SK-N-SH (cell line): ENCODE measurements at regions of chr7 and their contacts with region 1.

Region 1: DNA sequence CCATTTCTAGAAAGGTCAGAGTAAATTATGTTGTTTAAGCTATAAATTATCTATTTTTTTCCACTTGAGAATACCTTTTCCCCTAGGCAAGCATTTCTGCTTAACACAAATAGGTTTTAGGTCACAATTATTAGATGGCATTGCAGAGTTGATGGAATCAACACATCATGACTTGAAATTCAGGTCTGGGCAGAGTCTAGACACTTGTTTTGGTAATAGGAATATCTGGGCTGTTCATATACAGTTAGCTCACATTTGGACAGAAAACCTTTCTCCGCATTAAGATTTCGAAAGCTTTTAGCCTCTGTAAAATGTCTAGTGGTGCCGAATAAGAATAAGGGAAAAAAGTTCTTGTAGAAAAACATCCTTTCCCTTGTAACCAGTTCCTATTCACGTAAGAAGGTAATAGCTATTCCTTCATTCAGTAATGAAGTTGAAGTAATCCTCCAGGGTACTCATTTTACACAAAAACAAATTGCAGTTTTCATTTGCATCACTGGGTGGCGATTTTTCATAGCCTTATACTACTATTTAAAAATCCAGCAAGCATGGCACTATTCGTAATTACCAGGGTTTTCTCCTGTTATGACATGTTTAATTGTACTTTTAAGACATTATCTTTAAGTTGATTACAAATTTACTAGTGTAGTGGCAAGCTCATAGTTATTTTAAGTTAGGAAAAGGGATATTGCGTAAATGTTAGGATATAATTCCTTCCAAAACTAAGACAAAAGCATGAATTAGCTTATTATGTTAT is 37.0 kb downstream of the RPA3 start:
- DNase-seq: peak; percentile 48
- H3K4me3 ChIP-seq: no peak overlapping the region
- H3K27ac ChIP-seq: peak overlapping the region in 1 of 2 experiments; percentile 90; a peak in 2 of 4 replicates
- H3K4me1 ChIP-seq: peaks cover 0 to 12% of the 10 kb centered on the region in 2 experiments; a peak in 2 of 4 replicates
- H3K27me3 ChIP-seq: no peaks in the 10 kb centered on the region
- CTCF ChIP-seq: peak; percentile 93
- EP300 ChIP-seq: no peak
- RAD21 ChIP-seq: peak; percentile 93

Region 2: DNA sequence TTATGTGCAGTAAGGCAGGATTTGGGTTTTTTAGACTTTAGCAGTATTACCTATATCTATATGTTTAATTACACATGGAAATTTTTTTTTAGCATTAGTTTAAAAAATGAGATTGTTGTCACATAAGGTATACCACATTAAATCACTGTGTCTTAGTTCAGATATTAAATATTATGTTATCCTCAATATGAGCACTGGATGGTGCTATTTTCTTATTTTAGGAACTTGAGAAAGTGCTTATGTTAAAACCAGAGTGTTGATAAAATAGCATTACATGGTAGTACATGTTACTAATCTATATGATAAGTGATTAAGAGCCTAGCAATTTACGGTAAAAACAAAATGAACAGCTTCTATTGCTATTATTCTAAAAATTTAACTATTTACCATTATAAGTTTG is 85.9 kb before region 1 on chr7:
- CTCF ChIA-PET with region 1: interaction called, 20 read pairs
- POLR2A ChIA-PET with region 1: no interaction called
- DNase-seq: peak; percentile 58
- H3K4me3 ChIP-seq: no peak overlapping the region
- H3K27ac ChIP-seq: peak overlapping the region in 1 of 2 experiments; percentile 40; a peak in 2 of 4 replicates
- H3K4me1 ChIP-seq: no peaks in the 10 kb centered on the region
- H3K27me3 ChIP-seq: no peaks in the 10 kb centered on the region
- CTCF ChIP-seq: peak; percentile 74
- EP300 ChIP-seq: no peak
- RAD21 ChIP-seq: peak; percentile 86

Region 3: DNA sequence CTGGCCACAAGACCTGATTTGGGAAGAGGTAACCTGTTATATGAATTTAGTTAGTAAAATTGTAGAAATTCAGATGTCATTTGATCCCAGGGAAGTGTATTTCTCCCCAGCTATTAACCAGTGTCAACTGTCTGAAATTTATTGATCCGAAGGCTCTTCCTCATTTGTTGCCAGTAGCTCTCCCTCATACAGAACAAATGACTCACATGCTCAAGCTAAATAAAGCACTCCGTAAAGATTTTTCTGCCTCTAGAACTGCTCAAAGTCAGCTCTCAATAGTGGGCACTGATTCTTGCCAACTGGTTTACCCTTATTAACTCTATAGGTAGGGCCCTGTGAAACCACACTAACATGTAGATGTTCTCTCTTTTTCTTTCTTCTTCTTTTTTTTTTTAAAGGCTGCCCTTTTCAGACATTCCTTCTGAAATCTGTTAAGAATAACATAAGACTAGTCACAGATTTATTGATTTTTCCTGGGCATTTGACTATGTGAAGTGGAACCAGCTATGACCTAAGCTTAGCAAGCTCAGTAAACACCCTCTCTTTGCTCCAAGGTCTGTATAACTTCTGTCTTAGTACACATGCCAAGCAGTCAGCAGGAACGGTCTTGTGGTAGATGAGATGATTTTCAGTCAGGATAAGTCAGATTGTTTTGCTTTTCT is 15.2 kb after region 1 on chr7:
- CTCF ChIA-PET with region 1: interaction called, 50 read pairs
- POLR2A ChIA-PET with region 1: no interaction called
- DNase-seq: no peak
- H3K4me3 ChIP-seq: no peak overlapping the region
- H3K27ac ChIP-seq: peak overlapping the region; percentile 7 to 67; a peak in 3 of 4 replicates
- H3K4me1 ChIP-seq: peaks cover 4 to 13% of the 10 kb centered on the region in 2 experiments
- H3K27me3 ChIP-seq: no peaks in the 10 kb centered on the region
- CTCF ChIP-seq: no peak
- EP300 ChIP-seq: peak in 1 of 2 experiments; percentile 40; a peak in 1 of 4 replicates
- RAD21 ChIP-seq: no peak

Region 4: GRCh38 chr7:7739204-7740036 is 58.1 kb after region 1 on chr7:
- CTCF ChIA-PET with region 1: interaction called, 11 read pairs
- POLR2A ChIA-PET with region 1: no interaction called
- DNase-seq: no peak
- H3K4me3 ChIP-seq: no peak overlapping the region
- H3K27ac ChIP-seq: no peak overlapping the region
- H3K4me1 ChIP-seq: peaks cover 0 to 5% of the 10 kb centered on the region in 2 experiments; a peak in 1 of 4 replicates
- H3K27me3 ChIP-seq: no peaks in the 10 kb centered on the region
- CTCF ChIP-seq: no peak
- EP300 ChIP-seq: no peak
- RAD21 ChIP-seq: no peak

Region 5: GRCh38 chr7:7968543-7969305 is 287.4 kb after region 1 on chr7 and contains the start of gene GLCCI1:
- CTCF ChIA-PET with region 1: interaction called, 29 read pairs
- POLR2A ChIA-PET with region 1: interaction called, 16 read pairs
- DNase-seq: peak; percentile 96
- H3K4me3 ChIP-seq: peak within 1 kb of the TSS; percentile 87 to 100
- H3K27ac ChIP-seq: peak within 1 kb of the TSS; percentile 77 to 99
- H3K4me1 ChIP-seq: peaks cover 8 to 37% of the 10 kb centered on the region in 2 experiments; a peak in 3 of 4 replicates
- H3K27me3 ChIP-seq: no peaks in the 10 kb centered on the region
- CTCF ChIP-seq: no peak
- EP300 ChIP-seq: peak; percentile 34 to 39; a peak in 2 of 4 replicates
- RAD21 ChIP-seq: peak; percentile 13; the same call in 1 of the 2 replicates
- polyA plus RNA-seq, gene GLCCI1: 5.5 and 7.5 TPM in 2 replicates